Activated CD8-positive, alpha-beta memory T cell treated with anti-CD3 and anti-CD28 coated beads, Interleukin-2, amount 10 ng/mL, durations not matched to agents 7 days and 5 days (primary cell): ENCODE measurements at regions of chr16 and their contacts with region 1.

Region 1: GRCh38 chr16:56576585-56577293 is 11.9 kb downstream of the MT4 start:
- DNase-seq: peak; percentile 92
- ATAC-seq: peak; percentile 100
- H3K4me3 Mint-ChIP-seq: no peak overlapping the region
- H3K27ac Mint-ChIP-seq: no peak overlapping the region
- H3K4me1 Mint-ChIP-seq: peaks cover 8% of the 10 kb centered on the region
- H3K27me3 Mint-ChIP-seq: peaks cover 17% of the 10 kb centered on the region

Region 2: DNA sequence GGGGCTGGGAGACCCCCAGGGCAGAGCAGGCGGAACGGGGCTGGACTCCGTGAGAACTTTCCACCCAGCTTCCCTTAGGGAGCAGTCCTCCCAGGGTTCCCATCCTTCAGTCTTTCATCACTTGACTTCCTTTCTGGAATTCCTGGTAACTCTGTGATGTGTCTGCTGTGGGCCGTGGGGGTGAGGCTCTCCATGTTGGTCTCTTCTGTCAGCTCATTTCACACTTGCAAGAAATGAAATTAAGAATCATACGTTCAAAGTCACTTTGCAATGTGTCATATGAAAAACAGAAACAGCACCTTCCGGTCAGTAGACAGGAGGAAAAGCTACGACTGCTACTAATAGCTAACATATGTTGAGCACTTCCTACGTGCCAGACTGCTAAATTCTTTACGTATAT is 51.5 kb before region 1 on chr16:
- CTCF ChIA-PET with region 1: no interaction called
- DNase-seq: no peak
- ATAC-seq: no peak
- H3K4me3 Mint-ChIP-seq: no peak overlapping the region
- H3K27ac Mint-ChIP-seq: no peak overlapping the region
- H3K4me1 Mint-ChIP-seq: peaks cover 6% of the 10 kb centered on the region
- H3K27me3 Mint-ChIP-seq: peaks cover 12% of the 10 kb centered on the region

Region 3: GRCh38 chr16:56600398-56600999 is 23.8 kb after region 1 on chr16:
- CTCF ChIA-PET with region 1: interaction called, 13 read pairs
- DNase-seq: peak; percentile 62
- ATAC-seq: peak; percentile 61
- H3K4me3 Mint-ChIP-seq: no peak overlapping the region
- H3K27ac Mint-ChIP-seq: no peak overlapping the region
- H3K4me1 Mint-ChIP-seq: peaks cover 9% of the 10 kb centered on the region
- H3K27me3 Mint-ChIP-seq: peaks cover 42% of the 10 kb centered on the region

Region 4: DNA sequence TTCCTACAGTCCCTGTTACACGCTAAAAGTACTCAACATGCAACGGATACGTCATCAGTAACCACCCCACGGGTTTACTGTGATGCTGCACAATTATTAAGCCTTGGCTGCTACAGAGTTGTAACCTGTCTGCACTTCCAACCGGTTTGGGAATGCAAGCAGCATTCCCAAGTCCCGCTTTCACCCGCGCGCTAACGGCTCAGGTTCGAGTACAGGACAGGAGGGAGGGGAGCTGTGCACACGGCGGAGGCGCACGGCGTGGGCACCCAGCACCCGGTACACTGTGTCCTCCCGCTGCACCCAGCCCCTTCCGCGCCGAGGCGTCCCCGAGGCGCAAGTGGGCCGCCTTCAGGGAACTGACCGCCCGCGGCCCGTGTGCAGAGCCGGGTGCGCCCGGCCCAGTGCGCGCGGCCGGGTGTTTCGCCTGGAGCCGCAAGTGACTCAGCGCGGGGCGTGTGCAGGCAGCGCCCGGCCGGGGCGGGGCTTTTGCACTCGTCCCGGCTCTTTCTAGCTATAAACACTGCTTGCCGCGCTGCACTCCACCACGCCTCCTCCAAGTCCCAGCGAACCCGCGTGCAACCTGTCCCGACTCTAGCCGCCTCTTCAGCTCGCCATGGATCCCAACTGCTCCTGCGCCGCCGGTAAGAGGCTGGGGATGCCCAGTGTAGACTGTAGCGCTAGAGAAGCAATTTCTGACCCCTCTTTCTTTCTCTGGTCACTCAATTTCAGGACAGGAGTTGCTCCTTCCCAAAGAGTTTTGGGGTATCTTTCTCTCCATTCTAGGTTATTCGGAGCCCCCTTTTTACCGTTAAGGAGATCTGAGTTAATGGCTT is 31.5 kb after region 1 on chr16 and contains the start of gene MT2A:
- CTCF ChIA-PET with region 1: interaction called, 15 read pairs
- DNase-seq: peak; percentile 96
- ATAC-seq: peak; percentile 93
- H3K4me3 Mint-ChIP-seq: peak within 1 kb of the TSS; percentile 95
- H3K27ac Mint-ChIP-seq: peak within 1 kb of the TSS; percentile 94
- H3K4me1 Mint-ChIP-seq: peaks cover 50% of the 10 kb centered on the region
- H3K27me3 Mint-ChIP-seq: no peaks in the 10 kb centered on the region
- total RNA-seq, gene MT2A: 121 to 125 TPM

Region 5: GRCh38 chr16:56643080-56643778 is 66.5 kb after region 1 on chr16:
- CTCF ChIA-PET with region 1: interaction called, 15 read pairs
- DNase-seq: peak; percentile 91
- ATAC-seq: peak; percentile 100
- H3K4me3 Mint-ChIP-seq: peak overlapping the region; percentile 60
- H3K27ac Mint-ChIP-seq: peak overlapping the region; percentile 47
- H3K4me1 Mint-ChIP-seq: peaks cover 23% of the 10 kb centered on the region
- H3K27me3 Mint-ChIP-seq: peaks cover 64% of the 10 kb centered on the region

Region 6: GRCh38 chr16:56708525-56709442 is 132.0 kb after region 1 on chr16:
- CTCF ChIA-PET with region 1: interaction called, 94 read pairs
- DNase-seq: peak; percentile 79
- ATAC-seq: peak; percentile 83
- H3K4me3 Mint-ChIP-seq: peak overlapping the region; percentile 85
- H3K27ac Mint-ChIP-seq: peak overlapping the region; percentile 93
- H3K4me1 Mint-ChIP-seq: peaks cover 44% of the 10 kb centered on the region
- H3K27me3 Mint-ChIP-seq: no peaks in the 10 kb centered on the region

Region 7: GRCh38 chr16:56789360-56789759 is 212.6 kb after region 1 on chr16:
- CTCF ChIA-PET with region 1: interaction called, 15 read pairs
- DNase-seq: peak; percentile 71
- ATAC-seq: peak; percentile 72
- H3K4me3 Mint-ChIP-seq: no peak overlapping the region
- H3K27ac Mint-ChIP-seq: no peak overlapping the region
- H3K4me1 Mint-ChIP-seq: peaks cover 4% of the 10 kb centered on the region
- H3K27me3 Mint-ChIP-seq: no peaks in the 10 kb centered on the region

Region 8: GRCh38 chr16:56866943-56867830 is 290.4 kb after region 1 on chr16:
- CTCF ChIA-PET with region 1: interaction called, 11 read pairs
- DNase-seq: peak; percentile 56
- ATAC-seq: no peak
- H3K4me3 Mint-ChIP-seq: no peak overlapping the region
- H3K27ac Mint-ChIP-seq: no peak overlapping the region
- H3K4me1 Mint-ChIP-seq: peaks cover 31% of the 10 kb centered on the region
- H3K27me3 Mint-ChIP-seq: peaks cover 2% of the 10 kb centered on the region